B cell (primary cell): ENCODE measurements at regions of chr6 and their contacts with region 1.

Region 1: GRCh38 chr6:158869826-158870648 is 50.9 kb upstream of the EZR start:
- DNase-seq: peak; percentile 99
- ATAC-seq: peak; percentile 70
- H3K4me3 ChIP-seq: peak overlapping the region in 4 of 5 experiments; percentile 41 to 55 (median 51)
- H3K4me3 Mint-ChIP-seq: peak overlapping the region; percentile 91
- H3K27ac ChIP-seq: peak overlapping the region; percentile 99 to 100
- H3K27ac Mint-ChIP-seq: peak overlapping the region; percentile 100
- H3K4me1 ChIP-seq: peaks cover 50 to 54% of the 10 kb centered on the region in 2 donors
- H3K4me1 Mint-ChIP-seq: peaks cover 61% of the 10 kb centered on the region
- H3K27me3 ChIP-seq: no peaks in the 10 kb centered on the region
- H3K27me3 Mint-ChIP-seq: no peaks in the 10 kb centered on the region
- CTCF ChIP-seq: peak; percentile 44

Region 2: DNA sequence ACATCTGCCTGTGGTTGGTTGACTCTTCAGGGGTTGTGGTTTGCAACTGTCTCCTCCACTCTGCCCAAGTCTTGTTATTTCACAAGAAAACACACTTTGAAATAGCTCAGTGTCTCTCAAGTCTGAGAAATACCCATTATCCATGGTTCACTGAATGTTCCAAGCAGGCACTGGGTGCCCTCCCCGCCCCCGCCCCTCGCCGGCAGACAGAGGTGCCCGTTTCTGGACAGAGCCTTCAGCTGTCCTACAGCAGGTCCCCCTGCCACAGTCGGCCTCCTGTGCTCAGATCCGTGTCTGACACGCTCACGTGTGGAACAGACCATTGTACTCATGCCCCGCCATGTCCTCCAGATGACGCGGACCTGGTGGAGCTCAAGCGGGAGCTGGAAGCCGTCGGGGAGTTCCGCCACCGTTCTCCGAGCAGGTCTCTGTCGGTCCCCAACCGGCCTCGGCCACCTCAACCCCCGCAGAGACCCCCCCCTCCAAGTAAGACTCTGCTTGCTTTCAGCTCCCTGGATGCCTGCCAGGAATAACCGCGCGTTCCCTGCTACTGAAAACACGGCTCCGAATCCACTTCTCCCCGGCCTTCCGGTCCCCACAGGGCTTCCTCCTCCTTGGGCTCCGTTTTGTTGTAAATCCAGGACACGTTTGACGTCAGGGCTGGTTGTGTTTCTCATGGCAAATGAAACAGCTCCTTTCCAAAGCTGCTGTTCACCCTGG is 783.4 kb before region 1 on chr6:
- CTCF ChIA-PET with region 1: no interaction called
- POLR2A ChIA-PET with region 1: no interaction called
- intact Hi-C with region 1: no loop called
- DNase-seq: no peak
- ATAC-seq: no peak
- H3K4me3 ChIP-seq: no peak overlapping the region
- H3K4me3 Mint-ChIP-seq: no peak overlapping the region
- H3K27ac ChIP-seq: no peak overlapping the region
- H3K27ac Mint-ChIP-seq: no peak overlapping the region
- H3K4me1 ChIP-seq: no peaks in the 10 kb centered on the region
- H3K4me1 Mint-ChIP-seq: peaks cover 4% of the 10 kb centered on the region
- H3K27me3 ChIP-seq: no peaks in the 10 kb centered on the region
- H3K27me3 Mint-ChIP-seq: no peaks in the 10 kb centered on the region
- CTCF ChIP-seq: no peak

Region 3: DNA sequence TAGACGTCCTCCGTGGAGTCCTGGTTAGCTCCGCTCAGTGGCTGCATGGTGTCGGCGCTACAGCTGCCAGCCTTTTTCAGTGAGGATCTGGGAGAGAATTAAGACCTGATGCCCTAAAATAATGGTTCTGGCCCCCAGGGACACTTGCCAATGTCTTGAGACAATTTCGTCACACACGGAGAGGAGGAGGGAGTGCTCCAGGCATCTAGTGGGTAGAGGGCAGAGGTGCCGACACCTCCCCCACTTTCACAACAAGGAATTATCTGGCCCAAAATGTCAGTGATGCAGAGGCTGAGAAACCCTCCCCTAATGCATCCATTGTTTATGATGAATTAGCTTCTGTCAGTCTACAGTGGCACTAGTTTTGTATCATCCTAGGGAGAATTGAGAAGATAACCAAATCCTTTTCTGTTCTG is 285.8 kb before region 1 on chr6:
- CTCF ChIA-PET with region 1: no interaction called
- POLR2A ChIA-PET with region 1: no interaction called
- intact Hi-C with region 1: no loop called
- DNase-seq: no peak
- ATAC-seq: no peak
- H3K4me3 ChIP-seq: no peak overlapping the region
- H3K4me3 Mint-ChIP-seq: no peak overlapping the region
- H3K27ac ChIP-seq: no peak overlapping the region
- H3K27ac Mint-ChIP-seq: no peak overlapping the region
- H3K4me1 ChIP-seq: no peaks in the 10 kb centered on the region
- H3K4me1 Mint-ChIP-seq: no peaks in the 10 kb centered on the region
- H3K27me3 ChIP-seq: no peaks in the 10 kb centered on the region
- H3K27me3 Mint-ChIP-seq: no peaks in the 10 kb centered on the region
- CTCF ChIP-seq: no peak

Region 4: DNA sequence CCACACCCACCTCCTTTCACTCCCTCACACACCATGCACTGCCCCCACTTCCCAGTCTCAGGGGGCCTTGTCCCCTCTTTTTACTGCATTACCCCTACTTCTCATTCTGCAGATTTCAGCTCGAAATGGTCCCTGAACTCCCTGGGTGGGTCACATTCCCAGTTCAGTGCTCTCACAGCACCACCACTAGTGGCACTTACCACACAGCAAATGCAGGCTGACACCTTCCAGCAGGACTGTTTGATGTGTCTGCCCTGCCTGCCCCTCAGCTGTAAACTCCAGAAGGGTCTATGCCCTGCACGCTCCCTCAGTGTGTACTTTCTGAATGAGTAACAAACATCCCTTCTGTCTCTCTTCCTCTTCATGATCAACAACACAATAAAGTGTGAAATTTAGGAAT is 229.5 kb before region 1 on chr6:
- CTCF ChIA-PET with region 1: no interaction called
- POLR2A ChIA-PET with region 1: no interaction called
- intact Hi-C with region 1: no loop called
- DNase-seq: no peak
- ATAC-seq: no peak
- H3K4me3 ChIP-seq: no peak overlapping the region
- H3K4me3 Mint-ChIP-seq: no peak overlapping the region
- H3K27ac ChIP-seq: no peak overlapping the region
- H3K27ac Mint-ChIP-seq: no peak overlapping the region
- H3K4me1 ChIP-seq: peaks cover 9 to 23% of the 10 kb centered on the region in 2 donors
- H3K4me1 Mint-ChIP-seq: peaks cover 40% of the 10 kb centered on the region
- H3K27me3 ChIP-seq: no peaks in the 10 kb centered on the region
- H3K27me3 Mint-ChIP-seq: no peaks in the 10 kb centered on the region
- CTCF ChIP-seq: no peak

Region 5: GRCh38 chr6:158704181-158704822 is 165.7 kb before region 1 on chr6:
- CTCF ChIA-PET with region 1: interaction called, 15 read pairs
- POLR2A ChIA-PET with region 1: no interaction called
- intact Hi-C with region 1: loop called (anchors 2 kb)
- DNase-seq: peak; percentile 90
- ATAC-seq: peak; percentile 98
- H3K4me3 ChIP-seq: peak overlapping the region in 4 of 5 experiments; percentile 33 to 59 (median 52)
- H3K4me3 Mint-ChIP-seq: peak overlapping the region; percentile 92
- H3K27ac ChIP-seq: peak overlapping the region in 1 of 2 donors; percentile 36
- H3K27ac Mint-ChIP-seq: peak overlapping the region; percentile 89
- H3K4me1 ChIP-seq: peaks cover 19 to 30% of the 10 kb centered on the region in 2 donors
- H3K4me1 Mint-ChIP-seq: peaks cover 27% of the 10 kb centered on the region
- H3K27me3 ChIP-seq: no peaks in the 10 kb centered on the region
- H3K27me3 Mint-ChIP-seq: no peaks in the 10 kb centered on the region
- CTCF ChIP-seq: peak; percentile 99

Region 6: GRCh38 chr6:158819213-158819909 is 50.7 kb before region 1 on chr6 and contains the start of gene EZR:
- CTCF ChIA-PET with region 1: interaction called, 41 read pairs
- POLR2A ChIA-PET with region 1: interaction called, 162 read pairs
- intact Hi-C with region 1: loop called (anchors 1 kb)
- DNase-seq: peak; percentile 94
- ATAC-seq: peak; percentile 69
- H3K4me3 ChIP-seq: peak within 1 kb of the TSS; percentile 22 to 100 (median 69)
- H3K4me3 Mint-ChIP-seq: peak within 1 kb of the TSS; percentile 88
- H3K27ac ChIP-seq: peak within 1 kb of the TSS; percentile 96 to 99
- H3K27ac Mint-ChIP-seq: peak within 1 kb of the TSS; percentile 99
- H3K4me1 ChIP-seq: peaks cover 25 to 36% of the 10 kb centered on the region in 2 donors
- H3K4me1 Mint-ChIP-seq: peaks cover 36% of the 10 kb centered on the region
- H3K27me3 ChIP-seq: no peaks in the 10 kb centered on the region
- H3K27me3 Mint-ChIP-seq: no peaks in the 10 kb centered on the region
- CTCF ChIP-seq: no peak
- total RNA-seq, gene EZR: 943 and 945 TPM in 2 replicates

Region 7: GRCh38 chr6:158853072-158853871 is 16.8 kb before region 1 on chr6:
- CTCF ChIA-PET with region 1: interaction called, 52 read pairs
- POLR2A ChIA-PET with region 1: interaction called, 107 read pairs
- intact Hi-C with region 1: loop called (anchors 1 kb)
- DNase-seq: peak; percentile 87
- ATAC-seq: peak; percentile 85
- H3K4me3 ChIP-seq: peak overlapping the region in 4 of 5 experiments; percentile 20 to 56 (median 48)
- H3K4me3 Mint-ChIP-seq: no peak overlapping the region
- H3K27ac ChIP-seq: peak overlapping the region; percentile 85 to 90
- H3K27ac Mint-ChIP-seq: no peak overlapping the region
- H3K4me1 ChIP-seq: peaks cover 73 to 85% of the 10 kb centered on the region in 2 donors
- H3K4me1 Mint-ChIP-seq: peaks cover 45% of the 10 kb centered on the region
- H3K27me3 ChIP-seq: no peaks in the 10 kb centered on the region
- H3K27me3 Mint-ChIP-seq: no peaks in the 10 kb centered on the region
- CTCF ChIP-seq: no peak

Region 8: GRCh38 chr6:158938811-158939254 is 68.8 kb after region 1 on chr6:
- CTCF ChIA-PET with region 1: no interaction called
- POLR2A ChIA-PET with region 1: interaction called, 4 read pairs
- intact Hi-C with region 1: loop called (anchors 2 kb)
- DNase-seq: peak; percentile 55
- ATAC-seq: peak; percentile 57
- H3K4me3 ChIP-seq: peak overlapping the region in 4 of 5 experiments; percentile 38 to 65 (median 54)
- H3K4me3 Mint-ChIP-seq: peak overlapping the region; percentile 81
- H3K27ac ChIP-seq: peak overlapping the region in 1 of 2 donors; percentile 19
- H3K27ac Mint-ChIP-seq: peak overlapping the region; percentile 70
- H3K4me1 ChIP-seq: peaks cover 20 to 21% of the 10 kb centered on the region in 2 donors
- H3K4me1 Mint-ChIP-seq: peaks cover 19% of the 10 kb centered on the region
- H3K27me3 ChIP-seq: no peaks in the 10 kb centered on the region
- H3K27me3 Mint-ChIP-seq: no peaks in the 10 kb centered on the region
- CTCF ChIP-seq: no peak

Region 9: DNA sequence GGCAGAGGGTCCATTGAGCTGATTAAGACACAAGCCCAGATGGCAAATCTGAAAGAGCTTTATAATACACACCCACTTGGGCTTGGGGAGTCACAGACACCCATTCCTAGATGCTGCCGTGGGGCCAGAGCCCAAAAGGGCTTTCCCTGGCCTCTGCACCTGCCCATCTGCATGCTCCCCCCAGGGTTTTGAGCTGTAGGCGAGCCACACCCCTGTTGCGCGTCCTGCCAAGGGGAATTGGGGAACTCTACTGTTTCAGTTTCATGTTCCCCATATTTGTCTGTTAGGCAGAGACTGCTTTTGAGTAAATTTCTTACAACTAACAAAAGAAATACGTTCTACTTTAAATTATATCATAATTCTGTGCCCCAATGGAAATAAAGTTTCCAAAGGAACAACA is 246.3 kb after region 1 on chr6:
- CTCF ChIA-PET with region 1: no interaction called
- POLR2A ChIA-PET with region 1: interaction called, 5 read pairs
- intact Hi-C with region 1: loop called (anchors 5 kb)
- DNase-seq: peak; percentile 93
- ATAC-seq: peak; percentile 84
- H3K4me3 ChIP-seq: peak overlapping the region in 2 of 5 experiments; percentile 0 to 48
- H3K4me3 Mint-ChIP-seq: peak overlapping the region; percentile 88
- H3K27ac ChIP-seq: peak overlapping the region; percentile 99
- H3K27ac Mint-ChIP-seq: peak overlapping the region; percentile 95
- H3K4me1 ChIP-seq: peaks cover 86 to 87% of the 10 kb centered on the region in 2 donors
- H3K4me1 Mint-ChIP-seq: peaks cover 87% of the 10 kb centered on the region
- H3K27me3 ChIP-seq: no peaks in the 10 kb centered on the region
- H3K27me3 Mint-ChIP-seq: no peaks in the 10 kb centered on the region
- CTCF ChIP-seq: no peak